ENCODE measurements at regions of chrX and their contacts with region 1.

Region 1: DNA sequence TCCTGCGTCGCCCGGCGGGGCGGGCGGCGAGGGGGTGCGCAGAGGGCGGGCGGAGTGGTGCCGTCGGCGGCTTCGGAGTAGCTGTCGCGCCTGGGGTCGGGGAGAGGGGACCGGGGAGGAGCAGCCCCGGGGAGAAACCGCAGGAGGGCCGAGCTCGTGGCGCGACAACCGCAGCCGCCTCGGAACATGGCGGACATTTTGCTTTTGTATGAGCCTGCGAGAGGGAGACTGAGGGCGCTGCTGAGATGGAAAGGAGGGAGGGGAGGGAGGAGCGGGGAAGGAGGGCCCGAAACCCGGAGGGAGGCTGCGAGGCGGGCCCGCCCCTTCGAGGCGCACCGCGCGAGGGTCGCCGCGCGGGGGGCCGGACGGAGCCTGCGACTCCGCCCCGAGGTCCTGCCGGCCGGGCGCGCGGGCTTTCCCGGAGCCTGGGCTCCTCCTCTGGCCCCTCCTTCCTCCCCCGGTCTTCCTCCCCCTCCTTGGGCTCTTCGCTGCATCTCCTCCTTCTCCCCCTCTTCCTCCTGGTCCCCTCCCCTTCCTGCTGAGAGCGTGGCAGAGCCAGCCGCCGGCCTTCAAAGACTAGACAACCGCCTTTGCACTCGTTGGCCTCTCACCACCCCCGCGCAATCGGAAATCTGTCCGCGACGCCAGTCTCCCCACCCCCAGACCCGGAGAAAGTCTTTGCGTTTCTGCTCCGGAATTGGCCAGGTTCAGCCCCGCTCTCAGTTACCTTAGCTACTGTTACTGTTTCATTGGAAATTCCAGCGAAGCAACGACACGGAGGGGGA is 1.1 kb downstream of the INTS6L start:
- DNase-seq: peak; percentile 61
- ATAC-seq: peak; percentile 73
- H3K4me3 Mint-ChIP-seq: peak overlapping the region; percentile 98
- H3K27ac Mint-ChIP-seq: peak overlapping the region; percentile 99
- H3K4me1 Mint-ChIP-seq: peaks cover 30% of the 10 kb centered on the region
- H3K27me3 Mint-ChIP-seq: no peaks in the 10 kb centered on the region
- CTCF ChIP-seq: no peak

Region 2: DNA sequence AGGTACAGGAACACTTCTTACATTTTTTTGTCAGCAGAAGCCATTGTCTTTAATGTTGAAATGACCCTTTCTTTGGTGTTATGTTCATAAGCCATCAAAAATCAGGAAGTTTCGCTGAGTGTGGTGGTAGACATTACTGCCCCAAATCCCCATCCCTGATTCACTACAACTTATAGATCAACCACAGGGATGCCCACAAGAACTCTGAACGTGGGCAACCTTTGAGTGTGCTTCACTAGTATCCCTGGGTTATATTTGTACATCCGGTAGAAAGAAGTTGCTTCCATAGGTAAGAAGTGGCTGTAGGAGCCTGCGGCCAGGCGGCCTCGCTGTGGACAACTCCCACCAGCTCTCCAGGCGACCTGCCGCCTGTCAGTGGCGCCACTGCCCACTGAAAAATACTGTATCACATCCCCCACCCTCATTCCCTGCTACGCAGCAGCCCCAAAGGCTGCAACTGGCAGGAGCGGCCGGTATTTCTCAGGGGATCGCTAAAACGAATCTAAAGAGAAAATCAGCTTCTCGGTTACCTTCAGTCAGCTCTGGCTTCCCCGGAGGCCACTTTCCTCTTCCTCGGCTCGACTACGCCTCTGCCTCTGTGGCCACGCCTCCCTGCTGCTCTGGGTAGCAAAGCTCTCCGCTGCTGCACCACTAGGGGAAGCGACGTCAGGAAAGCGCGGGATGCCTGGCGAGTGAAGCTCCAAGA is 226.2 kb before region 1 on chrX:
- CTCF ChIA-PET with region 1: no interaction called
- POLR2A ChIA-PET with region 1: no interaction called
- intact Hi-C with region 1: loop called (anchors 5 kb)
- DNase-seq: peak; percentile 24
- ATAC-seq: peak; percentile 98
- H3K4me3 Mint-ChIP-seq: peak overlapping the region; percentile 87
- H3K27ac Mint-ChIP-seq: peak overlapping the region; percentile 61
- H3K4me1 Mint-ChIP-seq: peaks cover 15% of the 10 kb centered on the region
- H3K27me3 Mint-ChIP-seq: no peaks in the 10 kb centered on the region
- CTCF ChIP-seq: no peak

Region 3: DNA sequence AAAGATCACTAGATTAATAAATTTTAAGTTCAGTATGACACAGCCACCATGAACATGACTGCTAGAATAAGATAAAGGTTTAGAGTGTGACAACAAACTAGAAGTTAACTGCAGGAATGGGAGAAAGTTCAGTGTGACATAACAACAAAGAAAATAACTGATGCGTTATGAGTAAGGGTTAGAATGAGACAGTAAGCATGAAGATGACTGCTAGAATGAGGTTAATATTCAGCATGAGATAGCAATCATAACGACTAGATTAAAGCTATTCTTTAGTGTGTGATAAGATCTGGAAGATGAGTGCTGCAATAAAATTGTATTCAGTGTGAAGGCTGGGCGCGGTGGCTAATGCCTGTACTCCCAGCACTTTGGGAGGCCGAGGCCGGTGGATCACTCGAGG is 148.2 kb before region 1 on chrX:
- CTCF ChIA-PET with region 1: no interaction called
- POLR2A ChIA-PET with region 1: no interaction called
- intact Hi-C with region 1: no loop called
- DNase-seq: no peak
- ATAC-seq: no peak
- H3K4me3 Mint-ChIP-seq: no peak overlapping the region
- H3K27ac Mint-ChIP-seq: no peak overlapping the region
- H3K4me1 Mint-ChIP-seq: no peaks in the 10 kb centered on the region
- H3K27me3 Mint-ChIP-seq: no peaks in the 10 kb centered on the region
- CTCF ChIP-seq: no peak

Region 4: DNA sequence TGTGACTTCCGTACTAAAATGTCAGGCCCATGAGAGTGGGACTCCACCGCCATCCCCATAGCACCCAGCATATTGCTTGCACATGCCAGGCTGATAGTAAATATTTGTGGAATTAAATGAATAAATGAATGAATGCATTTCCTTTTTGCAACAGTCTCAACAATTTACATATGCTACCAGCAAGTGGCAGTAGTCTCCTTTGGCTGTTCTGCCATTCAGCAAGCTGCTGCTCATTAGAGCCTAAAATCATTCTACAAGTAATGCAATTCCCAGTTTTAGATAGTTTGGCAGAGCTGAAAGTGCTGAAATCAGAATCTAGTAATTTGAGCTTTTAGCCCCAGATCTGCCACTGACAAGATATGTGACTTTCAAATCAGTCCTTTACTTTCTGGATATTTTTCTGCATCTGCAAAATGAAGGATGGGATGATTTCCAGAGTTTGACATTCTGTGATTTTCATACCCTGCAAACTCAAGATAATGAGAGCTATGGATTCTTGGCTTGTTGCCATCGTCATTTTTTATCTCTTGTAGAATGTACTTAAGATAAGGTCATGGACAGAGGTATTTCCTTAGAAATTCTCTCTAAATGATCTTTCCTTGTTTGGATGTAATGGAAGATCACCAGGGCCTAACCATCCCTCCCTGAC is 36.8 kb before region 1 on chrX:
- CTCF ChIA-PET with region 1: no interaction called
- POLR2A ChIA-PET with region 1: interaction called, 4 read pairs
- intact Hi-C with region 1: loop called (anchors 1 kb)
- DNase-seq: no peak
- ATAC-seq: peak; percentile 25
- H3K4me3 Mint-ChIP-seq: no peak overlapping the region
- H3K27ac Mint-ChIP-seq: no peak overlapping the region
- H3K4me1 Mint-ChIP-seq: peaks cover 13% of the 10 kb centered on the region
- H3K27me3 Mint-ChIP-seq: no peaks in the 10 kb centered on the region
- CTCF ChIP-seq: no peak

Region 5: GRCh38 chrX:135497736-135498135 is 23.9 kb before region 1 on chrX:
- CTCF ChIA-PET with region 1: no interaction called
- POLR2A ChIA-PET with region 1: no interaction called
- intact Hi-C with region 1: no loop called
- DNase-seq: no peak
- ATAC-seq: no peak
- H3K4me3 Mint-ChIP-seq: no peak overlapping the region
- H3K27ac Mint-ChIP-seq: no peak overlapping the region
- H3K4me1 Mint-ChIP-seq: peaks cover 4% of the 10 kb centered on the region
- H3K27me3 Mint-ChIP-seq: no peaks in the 10 kb centered on the region
- CTCF ChIP-seq: no peak

Region 6: DNA sequence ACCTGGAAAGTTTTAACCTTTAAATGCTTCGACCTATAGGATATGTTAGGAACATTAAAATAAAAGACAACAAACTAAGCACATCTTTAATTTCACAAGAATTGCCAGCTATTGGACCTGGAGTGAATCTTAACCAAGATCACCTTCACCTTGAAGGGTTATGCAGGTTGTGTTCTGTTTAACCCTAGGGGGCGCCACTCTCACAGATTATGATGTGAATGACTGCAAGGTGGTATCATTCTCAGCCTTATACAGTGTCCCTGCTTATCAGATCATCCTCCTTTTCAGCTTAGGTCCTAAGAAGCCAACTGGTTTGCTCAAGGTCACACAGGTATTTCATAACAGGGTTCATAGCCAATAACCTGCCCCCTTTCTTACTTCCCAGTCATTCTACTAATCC is 22.3 kb after region 1 on chrX:
- CTCF ChIA-PET with region 1: interaction called, 3 read pairs
- POLR2A ChIA-PET with region 1: interaction called, 6 read pairs
- intact Hi-C with region 1: loop called (anchors 1 kb)
- DNase-seq: no peak
- ATAC-seq: peak; percentile 64
- H3K4me3 Mint-ChIP-seq: peak overlapping the region; percentile 5
- H3K27ac Mint-ChIP-seq: peak overlapping the region; percentile 78
- H3K4me1 Mint-ChIP-seq: peaks cover 45% of the 10 kb centered on the region
- H3K27me3 Mint-ChIP-seq: no peaks in the 10 kb centered on the region
- CTCF ChIP-seq: no peak

Region 7: GRCh38 chrX:135973548-135974278 is 452.1 kb after region 1 on chrX and contains the start of gene MMGT1:
- CTCF ChIA-PET with region 1: no interaction called
- POLR2A ChIA-PET with region 1: interaction called, 15 read pairs
- intact Hi-C with region 1: loop called (anchors 1 kb)
- DNase-seq: peak; percentile 72
- ATAC-seq: peak; percentile 93
- H3K4me3 Mint-ChIP-seq: peak within 1 kb of the TSS; percentile 99
- H3K27ac Mint-ChIP-seq: peak within 1 kb of the TSS; percentile 97
- H3K4me1 Mint-ChIP-seq: peaks cover 27% of the 10 kb centered on the region
- H3K27me3 Mint-ChIP-seq: no peaks in the 10 kb centered on the region
- CTCF ChIP-seq: no peak
- total RNA-seq, gene MMGT1: 20.3 and 21.4 TPM in 2 replicates

Region 8: DNA sequence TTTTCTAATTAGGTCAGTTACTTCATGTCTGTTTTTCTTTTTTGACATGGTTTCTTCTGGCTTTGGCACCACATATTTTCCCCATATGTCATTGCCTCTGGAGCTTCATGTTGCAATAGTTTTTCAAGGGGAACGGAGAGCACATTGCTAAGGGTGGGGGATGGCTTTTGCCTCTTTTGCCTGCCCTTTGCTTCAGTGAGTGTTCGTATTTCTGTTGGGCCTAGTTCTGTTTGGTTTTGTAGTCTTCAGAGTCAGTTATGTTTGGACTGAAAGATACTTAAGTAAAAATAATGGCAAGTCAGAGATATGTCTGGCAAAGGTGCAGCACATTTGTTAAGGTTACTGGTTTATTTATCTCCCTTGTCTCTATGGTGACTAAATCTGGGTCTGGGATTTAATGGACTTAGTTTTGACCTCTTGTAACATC is 654.8 kb after region 1 on chrX:
- CTCF ChIA-PET with region 1: no interaction called
- POLR2A ChIA-PET with region 1: no interaction called
- intact Hi-C with region 1: no loop called
- DNase-seq: no peak
- ATAC-seq: no peak
- H3K4me3 Mint-ChIP-seq: no peak overlapping the region
- H3K27ac Mint-ChIP-seq: no peak overlapping the region
- H3K4me1 Mint-ChIP-seq: no peaks in the 10 kb centered on the region
- H3K27me3 Mint-ChIP-seq: no peaks in the 10 kb centered on the region
- CTCF ChIP-seq: no peak

Measured in activated B cell treated with CpG ODN at 0.5 μM for 24 hours (primary cell).